CD4-positive, alpha-beta memory T cell (primary cell): ENCODE measurements at regions of chr18 and their contacts with region 1.

Region 1: DNA sequence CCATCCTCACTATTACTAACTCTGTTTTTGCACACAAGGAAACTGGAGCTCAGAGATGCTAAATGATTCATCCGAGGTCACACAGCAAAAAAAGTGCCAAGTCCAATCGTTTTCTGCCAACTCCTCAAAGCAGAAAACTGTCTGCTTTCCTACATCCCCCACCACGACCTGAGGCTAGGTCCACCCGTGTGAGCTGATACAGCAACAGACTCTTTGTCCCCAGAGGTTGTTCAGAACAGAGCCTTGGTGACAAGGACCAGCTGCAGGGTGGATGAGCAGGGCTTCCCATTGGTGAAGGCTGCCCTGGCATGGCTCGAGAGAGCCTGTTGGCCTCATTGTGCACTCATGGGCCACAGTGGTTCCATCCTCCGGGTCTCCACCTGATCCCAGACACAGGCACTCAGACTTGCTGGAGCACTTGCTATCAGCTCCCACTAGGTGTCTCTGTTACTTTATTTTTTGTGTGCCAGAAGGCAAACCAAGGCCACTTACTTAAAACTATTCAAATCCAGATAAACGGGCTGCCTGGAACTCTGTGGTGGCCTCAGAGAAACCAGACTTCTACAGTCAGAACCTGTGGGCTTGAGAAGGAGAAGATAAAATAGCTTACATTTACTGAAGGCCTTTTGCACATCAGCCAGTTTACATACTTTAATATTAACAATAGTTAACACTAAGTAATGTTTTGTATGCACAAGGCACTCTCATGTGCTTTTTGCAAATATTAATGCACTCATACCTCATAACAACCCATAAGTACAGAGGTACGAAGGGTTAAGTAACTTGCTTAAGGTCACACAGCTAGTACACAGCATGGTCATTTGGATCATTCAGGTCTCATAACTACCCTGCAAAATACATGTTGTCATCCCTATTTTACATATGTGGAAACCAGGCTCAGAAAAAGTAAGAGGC is 62.9 kb upstream of the CTIF start:
- DNase-seq: peak in 4 of 5 donors; percentile 33 to 41 (median 36)
- H3K4me3 ChIP-seq: no peak overlapping the region
- H3K4me3 Mint-ChIP-seq: no peak overlapping the region
- H3K27ac ChIP-seq: no peak overlapping the region
- H3K27ac Mint-ChIP-seq: peak overlapping the region in 1 of 7 donors; percentile 24
- H3K4me1 ChIP-seq: no peaks in the 10 kb centered on the region
- H3K4me1 Mint-ChIP-seq: no peaks in the 10 kb centered on the region
- H3K27me3 ChIP-seq: no peaks in the 10 kb centered on the region
- H3K27me3 Mint-ChIP-seq: peaks cover 16 to 32% of the 10 kb centered on the region in 2 donors

Region 2: GRCh38 chr18:48167897-48168253 is 308.0 kb before region 1 on chr18:
- CTCF ChIA-PET with region 1: no interaction called
- POLR2A ChIA-PET with region 1: no interaction called
- intact Hi-C with region 1: no loop called
- DNase-seq: no peak
- H3K4me3 ChIP-seq: no peak overlapping the region
- H3K4me3 Mint-ChIP-seq: no peak overlapping the region
- H3K27ac ChIP-seq: no peak overlapping the region
- H3K27ac Mint-ChIP-seq: no peak overlapping the region
- H3K4me1 ChIP-seq: peaks cover 5% of the 10 kb centered on the region
- H3K4me1 Mint-ChIP-seq: peaks cover 5 to 10% (median 6%) of the 10 kb centered on the region in 4 donors
- H3K27me3 ChIP-seq: no peaks in the 10 kb centered on the region
- H3K27me3 Mint-ChIP-seq: no peaks in the 10 kb centered on the region

Region 3: GRCh38 chr18:48488388-48488850 is 12.5 kb after region 1 on chr18:
- CTCF ChIA-PET with region 1: interaction called, 13 read pairs
- POLR2A ChIA-PET with region 1: no interaction called
- intact Hi-C with region 1: no loop called
- DNase-seq: no peak
- H3K4me3 ChIP-seq: no peak overlapping the region
- H3K4me3 Mint-ChIP-seq: no peak overlapping the region
- H3K27ac ChIP-seq: no peak overlapping the region
- H3K27ac Mint-ChIP-seq: no peak overlapping the region
- H3K4me1 ChIP-seq: no peaks in the 10 kb centered on the region
- H3K4me1 Mint-ChIP-seq: no peaks in the 10 kb centered on the region
- H3K27me3 ChIP-seq: no peaks in the 10 kb centered on the region
- H3K27me3 Mint-ChIP-seq: peaks cover 25 to 43% of the 10 kb centered on the region in 2 donors